Left ventricle myocardium superior (tissue), 1 donor: ENCODE measurements at regions of chr11 and their contacts with region 1.

Region 1: GRCh38 chr11:83836883-83837654 is 550.9 kb upstream of the CCDC90B start:
- DNase-seq: no peak
- ATAC-seq: peak; percentile 86

Region 2: GRCh38 chr11:83566948-83567347 is 270.1 kb before region 1 on chr11:
- intact Hi-C with region 1: no loop called
- DNase-seq: no peak
- ATAC-seq: no peak

Region 3: DNA sequence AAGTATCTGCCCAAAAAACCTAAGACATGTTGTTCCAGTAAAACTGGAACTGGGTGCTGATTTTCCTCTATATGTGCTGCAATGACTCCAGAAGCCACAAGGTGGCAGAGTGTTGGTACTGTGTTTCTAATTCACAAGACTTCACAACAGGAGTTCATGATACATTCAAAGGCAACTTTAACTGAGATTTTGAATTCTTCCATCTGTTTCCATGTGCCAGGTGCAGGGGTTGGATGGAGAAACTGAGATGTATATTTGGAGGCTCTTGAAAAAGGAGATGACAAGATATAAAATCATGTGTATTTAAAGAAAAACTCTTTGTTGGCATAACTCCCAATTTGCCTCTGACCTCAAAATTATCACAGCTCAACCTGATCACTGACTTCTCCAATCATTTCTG is 547.7 kb after region 1 on chr11:
- intact Hi-C with region 1: loop called (anchors 10 kb)
- DNase-seq: peak; percentile 22
- ATAC-seq: no peak

Region 4: GRCh38 chr11:84524422-84525051 is 687.5 kb after region 1 on chr11:
- intact Hi-C with region 1: loop called (anchors 10 kb)
- DNase-seq: no peak
- ATAC-seq: no peak